B cell (primary cell): ENCODE measurements at regions of chr5 and their contacts with region 1.

Region 1: DNA sequence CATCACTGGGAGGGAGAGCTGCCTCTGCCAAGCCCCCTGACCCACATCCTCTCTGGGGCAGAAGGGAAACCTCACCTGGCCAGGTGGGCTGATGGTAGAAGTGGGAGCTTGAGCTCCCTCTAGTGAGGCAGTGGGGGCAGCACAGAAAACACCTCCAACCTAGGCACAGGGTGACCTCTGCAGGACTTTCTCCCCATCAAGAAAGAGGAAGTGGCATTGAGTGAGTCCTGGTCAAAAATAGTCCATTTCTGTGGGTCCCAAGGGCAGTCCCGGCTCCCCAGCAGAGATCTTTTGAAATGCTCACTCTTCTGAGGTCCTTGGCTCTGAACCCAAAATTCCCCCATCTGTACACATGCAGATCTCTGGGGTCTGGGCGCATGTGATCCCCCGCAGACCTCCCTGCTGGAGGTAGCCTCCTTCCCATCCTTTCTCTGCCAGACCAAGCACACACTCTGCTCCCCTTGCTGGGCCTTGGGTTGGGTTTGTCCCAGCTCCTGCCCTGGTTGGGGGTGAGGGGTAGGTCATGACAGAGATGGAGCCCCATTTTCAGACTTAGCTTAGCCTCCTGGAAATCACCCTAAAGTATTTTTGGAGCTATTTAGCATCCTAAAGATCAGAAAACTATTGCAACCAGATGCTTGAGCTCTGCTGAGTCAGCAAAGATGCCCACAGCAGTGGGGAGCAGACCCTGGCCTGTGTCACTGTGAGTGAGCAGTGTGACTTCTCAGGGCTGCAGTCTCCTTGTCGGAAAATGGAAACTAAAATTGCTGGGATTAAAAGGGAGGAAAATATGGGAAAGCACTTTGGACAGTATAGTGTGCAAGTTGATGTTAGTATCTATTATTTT is 41.6 kb upstream of the LCP2 start:
- DNase-seq: peak; percentile 75
- ATAC-seq: peak; percentile 95
- H3K4me3 ChIP-seq: no peak overlapping the region
- H3K4me3 Mint-ChIP-seq: no peak overlapping the region
- H3K27ac ChIP-seq: no peak overlapping the region
- H3K27ac Mint-ChIP-seq: no peak overlapping the region
- H3K4me1 ChIP-seq: peaks cover 5 to 12% of the 10 kb centered on the region in 2 donors
- H3K4me1 Mint-ChIP-seq: peaks cover 18% of the 10 kb centered on the region
- H3K27me3 ChIP-seq: no peaks in the 10 kb centered on the region
- H3K27me3 Mint-ChIP-seq: peaks cover 9% of the 10 kb centered on the region
- CTCF ChIP-seq: peak; percentile 70

Region 2: DNA sequence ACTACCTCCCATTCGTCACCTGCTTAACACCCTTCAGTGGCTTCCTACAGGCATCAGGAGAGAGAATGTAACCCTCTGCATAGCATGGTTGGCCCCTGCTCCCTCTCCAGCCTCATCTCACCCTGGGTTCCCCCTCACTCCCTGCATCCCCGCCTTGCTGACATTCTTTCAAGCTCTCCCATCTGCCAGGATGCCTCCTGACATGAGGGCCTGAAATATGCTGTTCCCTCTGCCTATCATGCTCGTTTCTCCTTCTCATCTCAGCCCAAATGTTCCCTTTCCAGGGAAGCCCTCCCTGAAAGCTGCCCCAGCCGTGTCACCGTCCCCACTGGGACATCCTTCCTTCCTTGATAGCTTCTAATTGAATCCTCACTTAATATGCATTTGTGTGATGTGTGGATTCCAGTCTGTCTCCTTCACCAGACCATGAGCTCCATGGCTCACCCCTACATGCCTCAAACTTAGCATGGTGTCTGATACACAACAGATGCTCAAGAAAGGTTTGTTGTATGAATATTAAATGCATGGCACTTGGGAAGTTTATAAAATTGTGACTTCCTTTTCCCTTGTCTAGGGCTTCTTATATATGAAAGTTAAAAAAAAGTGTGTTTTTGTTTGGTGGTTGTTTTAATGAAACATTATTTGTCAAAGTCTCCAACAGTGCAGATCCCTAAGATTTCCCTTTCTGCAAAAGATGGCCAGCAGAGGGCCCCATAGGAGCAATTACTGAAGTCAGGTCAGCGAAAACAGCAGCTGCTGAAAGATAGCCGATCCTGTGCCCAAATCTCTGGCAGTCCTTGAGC is 113.6 kb before region 1 on chr5:
- CTCF ChIA-PET with region 1: interaction called, 104 read pairs
- POLR2A ChIA-PET with region 1: no interaction called
- intact Hi-C with region 1: loop called (anchors 1 kb)
- DNase-seq: peak; percentile 69
- ATAC-seq: no peak
- H3K4me3 ChIP-seq: no peak overlapping the region
- H3K4me3 Mint-ChIP-seq: no peak overlapping the region
- H3K27ac ChIP-seq: no peak overlapping the region
- H3K27ac Mint-ChIP-seq: no peak overlapping the region
- H3K4me1 ChIP-seq: no peaks in the 10 kb centered on the region
- H3K4me1 Mint-ChIP-seq: peaks cover 1% of the 10 kb centered on the region
- H3K27me3 ChIP-seq: no peaks in the 10 kb centered on the region
- H3K27me3 Mint-ChIP-seq: peaks cover 10% of the 10 kb centered on the region
- CTCF ChIP-seq: peak; percentile 81

Region 3: GRCh38 chr5:170262061-170263045 is 76.8 kb before region 1 on chr5:
- CTCF ChIA-PET with region 1: interaction called, 218 read pairs
- POLR2A ChIA-PET with region 1: no interaction called
- intact Hi-C with region 1: no loop called
- DNase-seq: no peak
- ATAC-seq: no peak
- H3K4me3 ChIP-seq: no peak overlapping the region
- H3K4me3 Mint-ChIP-seq: no peak overlapping the region
- H3K27ac ChIP-seq: no peak overlapping the region
- H3K27ac Mint-ChIP-seq: no peak overlapping the region
- H3K4me1 ChIP-seq: no peaks in the 10 kb centered on the region
- H3K4me1 Mint-ChIP-seq: no peaks in the 10 kb centered on the region
- H3K27me3 ChIP-seq: peaks cover 0 to 4% (median 0%) of the 10 kb centered on the region in 4 experiments
- H3K27me3 Mint-ChIP-seq: peaks cover 9% of the 10 kb centered on the region
- CTCF ChIP-seq: no peak

Region 4: DNA sequence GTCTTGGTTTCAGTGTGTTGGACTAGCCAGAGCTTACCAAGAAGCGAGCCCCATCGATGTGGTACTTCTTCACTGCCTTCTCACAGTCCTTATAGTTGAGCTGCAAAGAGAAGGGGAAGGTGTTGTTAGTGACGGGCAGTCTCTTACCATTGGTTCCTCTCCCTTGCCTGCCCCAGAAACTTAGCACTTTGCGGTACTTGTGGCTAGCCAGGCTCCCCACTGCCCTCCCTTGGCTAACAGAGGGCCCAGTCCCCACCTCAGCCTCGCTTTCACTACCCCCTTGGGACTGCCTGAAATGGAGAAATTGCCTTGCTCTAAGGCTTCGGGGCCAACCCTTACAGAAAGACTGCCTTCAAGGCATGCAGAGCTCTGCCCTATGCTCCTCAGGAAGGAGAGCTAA is 45.9 kb before region 1 on chr5:
- CTCF ChIA-PET with region 1: interaction called, 67 read pairs
- POLR2A ChIA-PET with region 1: interaction called, 3 read pairs
- intact Hi-C with region 1: loop called (anchors 1 kb)
- DNase-seq: peak; percentile 91
- ATAC-seq: peak; percentile 92
- H3K4me3 ChIP-seq: peak overlapping the region in 2 of 5 experiments; percentile 19 to 34
- H3K4me3 Mint-ChIP-seq: peak overlapping the region; percentile 30
- H3K27ac ChIP-seq: no peak overlapping the region
- H3K27ac Mint-ChIP-seq: peak overlapping the region; percentile 60
- H3K4me1 ChIP-seq: peaks cover 59 to 70% of the 10 kb centered on the region in 2 donors
- H3K4me1 Mint-ChIP-seq: peaks cover 63% of the 10 kb centered on the region
- H3K27me3 ChIP-seq: peaks cover 0 to 45% (median 19%) of the 10 kb centered on the region in 4 experiments
- H3K27me3 Mint-ChIP-seq: peaks cover 36% of the 10 kb centered on the region
- CTCF ChIP-seq: no peak

Region 5: DNA sequence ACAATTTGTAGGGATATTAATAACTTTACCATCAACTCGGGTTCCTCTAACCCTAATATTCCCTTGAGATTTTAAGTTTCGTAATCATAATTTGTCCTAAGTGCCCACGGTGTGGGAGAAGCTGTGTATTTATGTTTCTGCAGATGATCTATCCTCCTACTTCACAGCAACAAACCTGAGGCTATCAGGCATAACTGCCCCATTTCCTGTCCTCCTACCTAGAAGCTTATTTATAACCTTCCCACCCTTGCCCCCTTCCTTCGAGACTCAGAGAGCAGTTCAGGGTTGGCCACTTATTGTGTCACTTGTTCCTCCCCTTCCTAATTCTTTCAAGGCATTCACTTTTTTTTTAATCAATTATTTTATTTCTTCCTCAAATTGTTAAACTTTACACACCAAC is 12.0 kb before region 1 on chr5:
- CTCF ChIA-PET with region 1: interaction called, 24 read pairs
- POLR2A ChIA-PET with region 1: no interaction called
- intact Hi-C with region 1: loop called (anchors 1 kb)
- DNase-seq: peak; percentile 28
- ATAC-seq: no peak
- H3K4me3 ChIP-seq: peak overlapping the region in 3 of 5 experiments; percentile 13 to 28 (median 26)
- H3K4me3 Mint-ChIP-seq: no peak overlapping the region
- H3K27ac ChIP-seq: peak overlapping the region; percentile 31 to 66
- H3K27ac Mint-ChIP-seq: no peak overlapping the region
- H3K4me1 ChIP-seq: peaks cover 61 to 68% of the 10 kb centered on the region in 2 donors
- H3K4me1 Mint-ChIP-seq: peaks cover 18% of the 10 kb centered on the region
- H3K27me3 ChIP-seq: no peaks in the 10 kb centered on the region
- H3K27me3 Mint-ChIP-seq: no peaks in the 10 kb centered on the region
- CTCF ChIP-seq: no peak